AG04449 (cell line): ENCODE measurements at regions of chr16 and their contacts with region 1.

Region 1: DNA sequence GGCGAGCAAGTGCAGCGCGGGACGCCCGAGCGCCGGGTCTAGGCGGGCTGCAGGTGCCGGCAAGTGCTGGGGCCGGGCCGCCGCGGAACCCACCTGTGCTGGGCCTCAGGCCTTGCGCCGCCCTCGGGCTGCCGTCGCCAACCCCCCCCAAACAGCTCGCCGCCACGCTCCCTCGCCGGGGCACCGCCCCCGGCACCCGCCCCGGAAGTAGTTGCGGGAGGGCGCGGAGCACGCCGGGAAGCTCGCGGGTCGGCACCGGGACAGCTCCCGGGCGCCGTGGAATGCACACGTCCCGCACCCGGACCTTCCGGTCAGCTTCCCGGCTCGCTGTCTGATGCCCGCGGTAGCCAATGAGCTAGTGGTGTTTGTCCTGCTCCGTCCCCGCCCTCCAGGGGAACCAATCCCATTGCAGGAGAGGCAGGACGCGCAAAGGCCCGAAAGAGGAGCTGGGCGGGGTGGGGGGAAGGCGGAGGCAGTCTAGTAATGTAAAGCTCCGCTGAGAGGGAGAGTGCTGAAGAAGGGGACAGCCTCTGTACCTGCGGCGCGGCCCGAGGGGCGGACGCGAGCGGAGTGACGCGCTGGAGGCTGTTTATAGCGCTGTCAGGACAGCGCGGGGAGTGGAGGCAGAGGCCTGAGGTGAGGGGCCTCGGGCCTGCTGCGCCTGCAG is at the starts of genes ANKS3 and DNAAF8:
- DNase-seq: peak; percentile 83
- H3K4me3 ChIP-seq: peak within 1 kb of the TSS; percentile 97
- CTCF ChIP-seq: no peak

Region 2: DNA sequence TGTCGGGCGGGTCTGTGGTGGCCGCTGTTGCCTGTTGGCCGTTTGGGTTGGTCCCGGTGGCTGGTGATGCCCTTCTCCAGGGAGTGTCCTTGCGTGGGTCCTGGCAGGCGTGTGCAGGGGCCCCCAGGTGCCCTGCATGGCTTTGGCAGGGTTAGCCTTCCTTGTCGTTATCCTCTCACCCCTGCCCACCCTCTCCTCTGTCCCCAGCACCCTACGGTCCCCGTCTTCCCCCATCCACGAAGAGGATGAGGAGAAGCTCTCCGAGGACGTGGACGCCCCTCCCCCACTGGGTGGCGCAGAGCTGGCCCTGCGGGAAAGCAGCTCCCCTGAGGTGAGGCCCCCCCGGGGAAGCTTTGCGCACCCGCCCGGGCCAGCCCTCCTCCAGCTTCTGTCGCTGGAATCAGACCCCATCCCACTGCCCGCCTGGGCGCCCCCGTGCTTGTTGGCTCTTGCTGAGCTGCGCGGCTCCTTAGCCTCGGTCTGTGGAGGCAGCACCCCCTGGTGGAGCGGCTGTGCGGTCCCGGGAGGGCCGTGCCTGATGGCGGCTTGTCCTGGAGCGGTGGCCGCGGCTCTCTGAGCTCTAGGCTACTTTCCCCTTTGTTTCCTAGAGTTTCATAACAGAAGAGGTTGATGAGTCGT is 51.5 kb before region 1 on chr16:
- CTCF ChIA-PET with region 1: no interaction called
- POLR2A ChIA-PET with region 1: no interaction called
- DNase-seq: no peak
- H3K4me3 ChIP-seq: no peak overlapping the region
- CTCF ChIP-seq: peak; percentile 19

Region 3: GRCh38 chr16:4706871-4707270 is 27.3 kb before region 1 on chr16:
- CTCF ChIA-PET with region 1: no interaction called
- POLR2A ChIA-PET with region 1: no interaction called
- DNase-seq: no peak
- H3K4me3 ChIP-seq: no peak overlapping the region
- CTCF ChIP-seq: no peak

Region 4: DNA sequence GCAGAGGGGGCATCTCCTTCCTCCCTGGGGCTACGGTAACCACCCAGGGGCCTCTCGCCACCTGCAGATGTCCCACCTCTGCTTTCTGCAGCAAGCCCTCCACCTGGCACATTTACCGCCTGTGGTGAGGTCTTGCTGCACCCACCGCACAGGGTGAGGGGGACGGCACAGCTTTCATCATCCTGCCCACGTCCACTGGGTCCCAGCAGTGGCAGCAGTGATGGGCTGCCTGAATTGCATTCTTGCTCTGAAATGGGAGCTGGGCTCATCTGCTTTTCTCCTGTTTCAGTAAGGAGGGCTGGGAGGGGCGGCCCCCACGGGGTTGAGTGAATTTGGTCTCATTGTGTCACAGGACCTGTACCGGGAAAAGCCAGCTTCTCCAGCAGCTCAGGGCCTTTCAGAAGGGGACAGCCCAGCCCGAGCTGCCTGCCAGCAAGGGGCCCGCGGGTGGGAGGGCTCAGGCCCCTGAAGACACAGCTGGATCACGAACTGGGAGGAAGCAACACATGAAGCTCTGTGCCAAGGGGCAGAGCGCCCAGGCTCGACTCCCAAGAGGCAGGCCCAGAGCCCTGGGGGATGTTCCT is 12.9 kb after region 1 on chr16:
- CTCF ChIA-PET with region 1: interaction called, 3 read pairs
- POLR2A ChIA-PET with region 1: interaction called, 15 read pairs
- DNase-seq: no peak
- H3K4me3 ChIP-seq: no peak overlapping the region
- CTCF ChIP-seq: no peak